Right cardiac atrium (tissue), 5 donors: ENCODE measurements at regions of chr1 and their contacts with region 1.

Region 1: DNA sequence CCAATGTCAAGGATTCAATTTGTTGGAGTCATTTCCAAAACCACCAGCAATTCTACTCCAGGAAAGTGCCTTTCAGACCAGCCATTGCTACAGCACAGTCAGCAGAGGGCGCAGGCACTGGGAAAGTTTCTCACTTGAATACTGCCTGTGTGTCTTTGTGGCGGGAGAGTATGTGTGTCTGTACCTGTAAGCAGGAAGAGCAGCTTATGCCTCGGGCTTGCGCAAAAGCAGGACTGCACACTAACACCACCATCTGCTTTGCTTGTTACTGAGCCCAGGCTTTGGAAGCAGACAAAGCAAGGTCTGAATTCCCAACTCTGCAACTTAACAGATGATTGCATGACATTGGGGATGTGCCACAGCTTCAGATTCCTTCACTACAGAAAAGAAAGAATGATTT is 7.0 kb upstream of the CTSE start:
- DNase-seq: peak; percentile 46 to 75 (median 68)
- ATAC-seq: peak; percentile 75 to 86
- H3K4me3 ChIP-seq: no peak overlapping the region
- H3K27ac ChIP-seq: no peak overlapping the region
- H3K4me1 ChIP-seq: no peaks in the 10 kb centered on the region
- H3K27me3 ChIP-seq: peaks cover 3% of the 10 kb centered on the region

Region 2: GRCh38 chr1:206098242-206098923 is 67.7 kb after region 1 on chr1:
- intact Hi-C with region 1: loop called in 2 of 4 experiments (anchors 5 to 10 kb)
- DNase-seq: no peak
- ATAC-seq: no peak
- H3K4me3 ChIP-seq: no peak overlapping the region
- H3K27ac ChIP-seq: no peak overlapping the region
- H3K4me1 ChIP-seq: peaks cover 2% of the 10 kb centered on the region
- H3K27me3 ChIP-seq: no peaks in the 10 kb centered on the region

Region 3: GRCh38 chr1:206106328-206107167 is 75.8 kb after region 1 on chr1:
- intact Hi-C with region 1: loop called in 3 of 4 experiments (anchors 5 to 10 kb)
- DNase-seq: peak; percentile 83 to 93 (median 90)
- ATAC-seq: peak; percentile 84 to 87
- H3K4me3 ChIP-seq: no peak overlapping the region
- H3K27ac ChIP-seq: no peak overlapping the region
- H3K4me1 ChIP-seq: no peaks in the 10 kb centered on the region
- H3K27me3 ChIP-seq: no peaks in the 10 kb centered on the region